ENCODE measurements at regions of chrX and their contacts with region 1.

Region 1: GRCh38 chrX:136694431-136695087 is 46.6 kb downstream of the CD40LG start:
- DNase-seq: peak in 1 of 10 donors; percentile 8

Region 2: DNA sequence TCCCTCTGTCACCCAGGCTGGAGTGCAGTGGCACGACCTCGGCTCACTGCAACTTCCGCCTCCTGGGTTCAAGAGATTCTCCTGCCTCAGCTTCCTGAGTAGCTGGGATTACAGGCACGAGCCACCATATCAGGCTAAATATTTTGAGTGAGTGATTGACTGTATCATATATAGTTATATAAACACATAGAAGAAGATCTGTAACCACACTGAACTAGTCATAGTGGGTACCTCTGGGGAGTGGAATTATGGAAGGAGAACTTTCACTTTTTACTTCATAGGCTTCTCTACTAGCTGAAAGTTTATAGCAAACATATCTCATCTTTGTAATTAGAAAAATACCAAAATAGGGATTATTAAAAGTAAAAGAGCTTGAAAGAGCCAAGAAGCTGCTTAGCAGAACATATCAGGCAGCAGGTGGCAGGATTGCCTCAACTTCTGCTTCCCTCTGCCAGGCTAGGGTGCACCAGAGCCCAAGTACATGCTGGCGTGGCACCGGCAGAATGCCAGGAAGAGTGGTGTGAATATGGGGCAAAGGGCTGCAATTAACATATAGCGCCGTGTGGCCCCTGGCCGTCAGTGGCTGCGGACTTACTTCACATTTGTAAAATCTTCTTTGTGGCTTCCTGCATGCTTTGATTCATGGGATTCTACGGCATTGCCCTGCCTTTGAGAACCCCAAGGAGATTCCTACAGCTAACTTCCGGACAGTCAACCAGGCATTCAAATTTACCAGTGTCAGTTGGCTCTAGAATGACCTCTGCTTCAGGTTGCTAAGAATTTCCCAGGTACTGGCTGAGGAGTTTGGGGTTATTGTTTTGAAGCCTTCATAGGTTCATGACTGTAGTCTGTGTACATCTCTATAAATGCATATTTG is 86.0 kb before region 1 on chrX:
- intact Hi-C with region 1: loop called (anchors 10 kb)
- DNase-seq: peak in 5 of 10 donors; percentile 7 to 27 (median 10)

Region 3: DNA sequence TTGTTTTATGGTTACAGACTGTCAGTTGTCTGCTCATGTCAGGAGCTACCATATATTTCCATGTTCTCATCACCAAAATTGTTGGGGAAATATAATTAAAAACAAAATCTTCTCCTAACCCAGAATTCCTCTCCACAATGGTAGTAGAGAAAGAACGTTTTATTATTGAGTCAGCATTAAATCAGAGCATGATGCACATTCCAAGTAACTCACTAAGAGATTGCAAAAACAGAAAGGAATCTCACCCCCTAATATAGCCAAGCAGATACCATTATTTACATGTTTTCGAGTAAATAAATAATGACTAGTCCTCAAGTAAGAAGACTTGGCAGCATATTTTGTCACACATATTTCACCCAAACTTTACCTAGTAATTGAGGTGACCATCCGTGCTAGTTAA is 122.4 kb after region 1 on chrX:
- intact Hi-C with region 1: no loop called
- DNase-seq: no peak